CD8-positive, alpha-beta T cell (primary cell): ENCODE measurements at regions of chr3 and their contacts with region 1.

Region 1: GRCh38 chr3:87227104-87227834 is at the start of gene CHMP2B:
- DNase-seq: peak; percentile 83 to 95 (median 92)
- ATAC-seq: peak; percentile 87
- H3K4me3 ChIP-seq: peak within 1 kb of the TSS; percentile 88 to 92
- H3K4me3 Mint-ChIP-seq: peak within 1 kb of the TSS; percentile 96
- H3K27ac ChIP-seq: peak within 1 kb of the TSS; percentile 83 to 88
- H3K27ac Mint-ChIP-seq: peak within 1 kb of the TSS; percentile 95
- H3K4me1 ChIP-seq: peaks cover 27% of the 10 kb centered on the region
- H3K4me1 Mint-ChIP-seq: peaks cover 49% of the 10 kb centered on the region
- H3K27me3 ChIP-seq: no peaks in the 10 kb centered on the region
- H3K27me3 Mint-ChIP-seq: peaks cover 6% of the 10 kb centered on the region
- CTCF ChIP-seq: no peak
- total RNA-seq, gene CHMP2B: 32.4 to 35.8 TPM

Region 2: DNA sequence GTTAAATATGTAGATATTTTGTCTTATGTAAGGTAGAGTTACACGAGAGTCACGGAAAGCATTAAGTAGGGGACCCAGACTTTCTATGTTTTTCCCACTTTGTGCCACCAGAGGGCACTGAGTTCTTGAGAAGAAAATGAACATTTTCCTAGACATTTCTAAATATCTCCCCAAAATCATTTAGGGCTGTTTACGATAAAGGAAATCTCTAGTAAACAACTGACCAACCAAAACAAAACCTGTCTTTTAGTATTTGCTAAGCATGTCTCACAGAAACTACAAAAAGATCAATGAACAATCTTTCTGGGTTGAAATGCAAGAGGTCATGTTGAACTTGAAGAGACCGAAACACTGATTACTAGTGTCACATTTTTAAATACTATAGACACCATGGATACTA is 33.0 kb after region 1 on chr3:
- CTCF ChIA-PET with region 1: no interaction called
- POLR2A ChIA-PET with region 1: no interaction called
- intact Hi-C with region 1: no loop called
- DNase-seq: peak in 6 of 9 experiments; percentile 14 to 59 (median 43)
- ATAC-seq: peak; percentile 66
- H3K4me3 ChIP-seq: no peak overlapping the region
- H3K4me3 Mint-ChIP-seq: no peak overlapping the region
- H3K27ac ChIP-seq: no peak overlapping the region
- H3K27ac Mint-ChIP-seq: no peak overlapping the region
- H3K4me1 ChIP-seq: no peaks in the 10 kb centered on the region
- H3K4me1 Mint-ChIP-seq: peaks cover 2% of the 10 kb centered on the region
- H3K27me3 ChIP-seq: no peaks in the 10 kb centered on the region
- H3K27me3 Mint-ChIP-seq: no peaks in the 10 kb centered on the region
- CTCF ChIP-seq: peak; percentile 61

Region 3: GRCh38 chr3:87298111-87298718 is 70.9 kb after region 1 on chr3:
- CTCF ChIA-PET with region 1: no interaction called
- POLR2A ChIA-PET with region 1: no interaction called
- intact Hi-C with region 1: no loop called
- DNase-seq: peak in 2 of 9 experiments; percentile 33 to 50
- ATAC-seq: peak; percentile 62
- H3K4me3 ChIP-seq: no peak overlapping the region
- H3K4me3 Mint-ChIP-seq: no peak overlapping the region
- H3K27ac ChIP-seq: no peak overlapping the region
- H3K27ac Mint-ChIP-seq: no peak overlapping the region
- H3K4me1 ChIP-seq: no peaks in the 10 kb centered on the region
- H3K4me1 Mint-ChIP-seq: peaks cover 2% of the 10 kb centered on the region
- H3K27me3 ChIP-seq: no peaks in the 10 kb centered on the region
- H3K27me3 Mint-ChIP-seq: peaks cover 2% of the 10 kb centered on the region
- CTCF ChIP-seq: peak; percentile 89

Region 4: GRCh38 chr3:88149509-88150362 is 922.5 kb after region 1 on chr3 and contains the start of gene C3orf38:
- CTCF ChIA-PET with region 1: no interaction called
- POLR2A ChIA-PET with region 1: interaction called, 9 read pairs
- intact Hi-C with region 1: loop called in 1 of 2 experiments (anchors 1 kb)
- DNase-seq: peak; percentile 63 to 89 (median 78)
- ATAC-seq: peak; percentile 94
- H3K4me3 ChIP-seq: peak within 1 kb of the TSS; percentile 91 to 99
- H3K4me3 Mint-ChIP-seq: peak within 1 kb of the TSS; percentile 99
- H3K27ac ChIP-seq: peak within 1 kb of the TSS; percentile 85 to 89
- H3K27ac Mint-ChIP-seq: peak within 1 kb of the TSS; percentile 100
- H3K4me1 ChIP-seq: peaks cover 27% of the 10 kb centered on the region
- H3K4me1 Mint-ChIP-seq: peaks cover 39% of the 10 kb centered on the region
- H3K27me3 ChIP-seq: no peaks in the 10 kb centered on the region
- H3K27me3 Mint-ChIP-seq: no peaks in the 10 kb centered on the region
- CTCF ChIP-seq: no peak
- total RNA-seq, gene C3orf38: 41.3 to 45.5 TPM